PC-3 (cell line): ENCODE measurements at regions of chr7 and their contacts with region 1.

Region 1: DNA sequence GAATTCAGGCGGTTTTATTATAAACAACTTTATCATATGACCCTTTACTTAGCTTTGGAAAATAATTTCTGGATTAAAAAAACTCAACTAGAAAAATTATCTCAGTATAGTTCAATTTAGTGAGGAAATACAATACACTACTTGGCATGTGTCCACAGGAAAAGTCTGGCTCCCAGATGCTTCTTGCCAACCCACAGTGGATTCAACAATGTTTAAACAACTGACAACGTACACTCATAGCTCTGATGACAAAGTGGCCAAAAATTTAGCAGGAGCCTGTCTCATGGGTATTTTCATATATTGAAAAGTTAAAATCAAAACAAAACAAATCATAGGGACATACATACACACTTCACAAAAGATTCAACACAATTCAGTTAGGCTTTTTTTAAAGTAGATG is 158.8 kb downstream of the SKAP2 start:
- DNase-seq: peak; percentile 94
- ATAC-seq: peak; percentile 98
- H3K4me3 ChIP-seq: no peak overlapping the region
- H3K27ac ChIP-seq: peak overlapping the region; percentile 29
- H3K4me1 ChIP-seq: peaks cover 33% of the 10 kb centered on the region
- H3K27me3 ChIP-seq: no peaks in the 10 kb centered on the region
- CTCF ChIP-seq: no peak

Region 2: DNA sequence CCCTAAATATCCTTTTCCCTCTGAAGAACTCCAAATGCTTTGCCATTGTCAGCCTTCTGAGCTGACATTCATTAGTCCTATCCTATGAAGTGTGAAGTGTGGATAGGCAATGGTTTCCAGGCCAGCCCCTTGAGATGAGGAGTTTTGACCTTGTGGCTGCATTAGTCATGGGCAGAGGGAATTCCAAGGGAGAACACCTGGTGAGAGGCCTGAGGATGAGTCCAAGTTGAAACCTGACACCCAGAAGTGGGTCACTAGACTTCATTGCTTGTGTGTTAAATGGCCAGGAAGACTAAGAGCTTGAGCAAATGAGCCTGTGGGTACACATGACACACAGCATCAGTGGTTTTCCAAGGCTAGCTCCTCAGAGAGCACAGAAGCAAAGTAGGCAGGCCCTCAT is 101.9 kb before region 1 on chr7:
- CTCF ChIA-PET with region 1: no interaction called
- POLR2A ChIA-PET with region 1: no interaction called
- intact Hi-C with region 1: no loop called
- DNase-seq: peak; percentile 95
- ATAC-seq: peak; percentile 99
- H3K4me3 ChIP-seq: no peak overlapping the region
- H3K27ac ChIP-seq: peak overlapping the region; percentile 56
- H3K4me1 ChIP-seq: peaks cover 28% of the 10 kb centered on the region
- H3K27me3 ChIP-seq: no peaks in the 10 kb centered on the region
- CTCF ChIP-seq: no peak

Region 3: GRCh38 chr7:26664735-26665408 is 40.7 kb before region 1 on chr7:
- CTCF ChIA-PET with region 1: no interaction called
- POLR2A ChIA-PET with region 1: no interaction called
- intact Hi-C with region 1: no loop called
- DNase-seq: peak; percentile 36
- ATAC-seq: no peak
- H3K4me3 ChIP-seq: no peak overlapping the region
- H3K27ac ChIP-seq: no peak overlapping the region
- H3K4me1 ChIP-seq: peaks cover 8% of the 10 kb centered on the region; the same call in 1 of the 2 replicates
- H3K27me3 ChIP-seq: no peaks in the 10 kb centered on the region
- CTCF ChIP-seq: no peak

Region 4: DNA sequence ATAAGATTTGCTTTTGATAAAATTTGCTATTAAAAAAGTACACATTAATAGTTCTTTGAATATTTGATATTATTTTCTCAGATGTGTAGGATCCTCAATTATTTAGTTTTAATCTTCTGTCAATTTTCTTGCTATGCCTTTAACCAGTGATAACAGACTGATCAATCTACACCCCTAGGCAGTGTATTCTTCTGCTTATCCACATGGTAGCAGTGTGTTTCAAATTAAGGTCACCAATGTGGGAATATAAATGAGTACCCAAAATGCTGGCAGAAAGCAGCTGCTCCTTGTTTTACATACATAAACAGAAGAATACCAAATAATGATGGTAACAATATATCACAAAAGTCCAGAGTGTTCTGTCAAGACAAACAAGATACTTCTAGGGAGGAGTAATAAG is 71.8 kb after region 1 on chr7:
- CTCF ChIA-PET with region 1: no interaction called
- POLR2A ChIA-PET with region 1: no interaction called
- intact Hi-C with region 1: loop called (anchors 5 kb)
- DNase-seq: no peak
- ATAC-seq: no peak
- H3K4me3 ChIP-seq: no peak overlapping the region
- H3K27ac ChIP-seq: no peak overlapping the region
- H3K4me1 ChIP-seq: no peaks in the 10 kb centered on the region
- H3K27me3 ChIP-seq: no peaks in the 10 kb centered on the region
- CTCF ChIP-seq: no peak

Region 5: DNA sequence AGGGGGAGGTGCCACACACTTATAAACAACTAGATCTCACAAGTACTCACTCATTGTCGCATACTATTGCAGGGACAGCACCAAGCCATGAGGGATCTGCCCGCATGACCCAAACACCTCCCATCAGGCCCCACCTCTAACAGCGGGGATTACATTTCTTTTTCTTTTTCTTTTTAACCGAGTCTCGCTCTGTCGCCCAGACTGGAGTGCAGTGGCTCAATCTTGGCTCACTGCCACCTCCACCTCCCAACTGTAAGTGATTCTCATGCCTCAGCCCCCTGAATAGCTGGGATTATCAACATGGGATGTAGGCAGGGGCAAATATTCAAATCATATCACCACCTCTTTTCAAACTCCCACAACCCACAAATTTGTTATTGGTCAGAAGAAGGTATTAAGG is 82.1 kb after region 1 on chr7:
- CTCF ChIA-PET with region 1: no interaction called
- POLR2A ChIA-PET with region 1: no interaction called
- intact Hi-C with region 1: no loop called
- DNase-seq: no peak
- ATAC-seq: no peak
- H3K4me3 ChIP-seq: no peak overlapping the region
- H3K27ac ChIP-seq: no peak overlapping the region
- H3K4me1 ChIP-seq: no peaks in the 10 kb centered on the region
- H3K27me3 ChIP-seq: no peaks in the 10 kb centered on the region
- CTCF ChIP-seq: no peak